A549 (cell line): ENCODE measurements at regions of chr1 and their contacts with region 1.

Region 1: DNA sequence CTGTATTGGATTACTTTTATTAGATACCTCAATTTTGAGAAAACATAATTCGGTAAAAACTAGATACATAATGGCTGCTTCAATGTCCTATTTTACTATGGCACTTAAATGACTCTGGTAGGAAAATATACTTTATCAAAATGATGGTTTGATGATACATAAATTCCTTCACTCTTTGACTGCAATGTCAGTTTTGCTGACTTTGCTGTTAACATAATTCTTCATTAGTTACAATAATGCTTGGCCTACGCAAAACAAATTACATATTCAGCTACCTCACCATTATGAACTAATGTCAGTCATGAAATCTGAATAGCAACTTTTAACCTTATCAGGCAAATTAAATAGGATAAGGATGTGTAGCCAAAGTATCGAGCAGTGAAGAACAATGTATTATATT is 1364.7 kb downstream of the KCNT2 start:
- DNase-seq: no peak
- ATAC-seq: no peak
- H3K4me3 ChIP-seq: no peak overlapping the region
- H3K27ac ChIP-seq: no peak overlapping the region
- H3K4me1 ChIP-seq: no peaks in the 10 kb centered on the region
- CTCF ChIP-seq: no peak
- EP300 ChIP-seq: no peak
- POLR2A ChIP-seq: no peak
- RAD21 ChIP-seq: no peak

Region 2: DNA sequence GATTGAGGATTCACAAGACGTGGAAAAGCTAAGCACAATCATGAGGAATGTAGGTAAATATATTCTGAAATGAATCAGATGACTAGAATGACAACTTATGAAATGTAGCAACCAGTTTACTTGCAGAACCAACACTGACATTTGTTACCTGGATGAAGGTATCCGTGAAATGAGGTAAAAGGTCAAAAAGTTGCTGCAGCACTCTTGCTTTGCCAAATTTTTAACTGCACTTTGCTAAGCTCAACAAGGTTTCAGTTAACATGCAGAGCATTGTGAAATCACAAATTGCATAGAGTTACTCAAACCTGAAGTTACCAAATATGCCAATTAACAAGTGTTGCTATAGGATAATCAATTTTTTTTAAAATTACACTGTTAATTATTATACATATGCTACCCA is 84.6 kb after region 1 on chr1:
- CTCF ChIA-PET with region 1: no interaction called
- POLR2A ChIA-PET with region 1: no interaction called
- DNase-seq: no peak
- ATAC-seq: no peak
- H3K4me3 ChIP-seq: no peak overlapping the region
- H3K27ac ChIP-seq: no peak overlapping the region
- H3K4me1 ChIP-seq: no peaks in the 10 kb centered on the region
- CTCF ChIP-seq: no peak
- EP300 ChIP-seq: no peak
- POLR2A ChIP-seq: no peak
- RAD21 ChIP-seq: no peak

Region 3: DNA sequence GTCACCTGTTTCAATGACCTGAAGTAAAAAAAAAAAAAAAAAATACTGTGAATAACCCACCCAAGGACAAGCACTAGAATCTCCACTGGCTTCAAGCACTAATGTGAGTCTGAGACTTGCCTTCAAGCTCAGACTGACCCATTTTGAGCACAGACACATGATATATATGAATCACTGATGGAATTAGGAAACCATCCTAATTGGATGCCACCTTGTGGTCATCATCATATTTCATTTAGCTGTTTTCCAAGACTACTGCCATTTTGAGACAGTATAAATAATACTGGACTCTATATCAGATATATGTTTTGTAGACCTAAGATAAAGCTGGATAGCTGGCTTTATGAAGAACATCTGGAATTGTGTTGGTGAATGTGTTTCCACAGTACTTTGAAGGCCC is 132.7 kb after region 1 on chr1:
- CTCF ChIA-PET with region 1: no interaction called
- POLR2A ChIA-PET with region 1: interaction called, 11 read pairs
- DNase-seq: peak; percentile 3 to 13
- ATAC-seq: no peak
- H3K4me3 ChIP-seq: no peak overlapping the region
- H3K27ac ChIP-seq: no peak overlapping the region
- H3K4me1 ChIP-seq: no peaks in the 10 kb centered on the region
- CTCF ChIP-seq: peak; percentile 14; the same call in 2 of the 3 replicates
- EP300 ChIP-seq: no peak
- POLR2A ChIP-seq: no peak
- RAD21 ChIP-seq: 0 out of 5 replicates have a peak, but pooled peaks of 1 of the 2 experiments have one; percentile 4